ENCODE measurements at regions of chr1 and their contacts with region 1.

Region 1: DNA sequence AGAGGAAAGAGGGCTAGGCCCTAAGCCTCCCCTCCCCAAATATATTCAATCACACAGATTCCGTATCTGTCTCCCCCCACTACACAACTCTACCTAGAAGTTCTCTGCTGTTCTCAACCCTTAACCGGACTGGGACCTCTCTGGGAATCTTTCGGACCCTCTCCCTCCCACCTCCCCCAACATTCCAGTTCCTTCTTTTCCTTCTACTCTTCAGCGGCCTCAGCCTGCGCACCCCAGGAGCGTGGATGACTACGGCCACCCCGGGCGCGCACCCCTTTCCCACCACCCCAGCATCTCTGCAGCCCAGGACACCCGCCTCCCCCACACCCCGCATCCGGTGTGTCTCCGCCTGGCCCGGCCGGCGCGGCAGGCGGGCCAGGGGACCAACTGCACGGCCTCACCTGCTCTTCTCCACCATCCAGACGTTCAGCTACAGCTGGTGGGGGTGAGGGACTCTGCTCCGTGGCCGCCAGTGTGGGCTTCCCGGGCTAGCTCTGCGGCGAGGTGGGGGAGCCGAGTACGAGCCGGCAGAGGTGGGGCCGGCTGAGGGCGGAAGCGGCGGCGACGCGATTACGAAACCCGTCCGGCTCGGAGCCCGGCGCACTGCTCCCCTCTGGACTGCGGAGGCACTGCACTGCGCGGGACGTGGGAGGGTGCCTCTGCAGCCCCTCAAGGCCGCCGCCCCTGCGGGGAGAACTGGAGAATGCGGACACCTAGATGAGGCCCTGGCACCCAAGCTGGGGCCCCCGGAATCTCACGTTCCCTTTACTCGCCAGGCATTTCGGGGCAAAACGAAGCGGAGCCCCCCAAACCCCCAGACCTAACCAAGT is at the start of gene CDC42SE1:
- DNase-seq: peak; percentile 87
- H3K4me3 Mint-ChIP-seq: peak within 1 kb of the TSS; percentile 97
- H3K27ac Mint-ChIP-seq: peak within 1 kb of the TSS; percentile 97
- H3K4me1 Mint-ChIP-seq: peaks cover 51% of the 10 kb centered on the region
- H3K27me3 Mint-ChIP-seq: no peaks in the 10 kb centered on the region
- total RNA-seq, gene CDC42SE1: 345 to 347 TPM

Region 2: GRCh38 chr1:151047925-151048645 is 11.2 kb before region 1 on chr1:
- CTCF ChIA-PET with region 1: interaction called, 48 read pairs
- POLR2A ChIA-PET with region 1: interaction called, 148 read pairs
- DNase-seq: peak; percentile 65
- H3K4me3 Mint-ChIP-seq: peak overlapping the region; percentile 82
- H3K27ac Mint-ChIP-seq: peak overlapping the region; percentile 79
- H3K4me1 Mint-ChIP-seq: peaks cover 57% of the 10 kb centered on the region
- H3K27me3 Mint-ChIP-seq: no peaks in the 10 kb centered on the region

Region 3: GRCh38 chr1:151070474-151071276 is 11.4 kb after region 1 on chr1 and contains the start of gene GABPB2:
- CTCF ChIA-PET with region 1: interaction called, 23 read pairs
- POLR2A ChIA-PET with region 1: interaction called, 129 read pairs
- DNase-seq: peak; percentile 88
- H3K4me3 Mint-ChIP-seq: peak within 1 kb of the TSS; percentile 98
- H3K27ac Mint-ChIP-seq: peak within 1 kb of the TSS; percentile 99
- H3K4me1 Mint-ChIP-seq: peaks cover 31% of the 10 kb centered on the region
- H3K27me3 Mint-ChIP-seq: no peaks in the 10 kb centered on the region
- total RNA-seq, gene GABPB2: 24.5 to 25.9 TPM

Region 4: DNA sequence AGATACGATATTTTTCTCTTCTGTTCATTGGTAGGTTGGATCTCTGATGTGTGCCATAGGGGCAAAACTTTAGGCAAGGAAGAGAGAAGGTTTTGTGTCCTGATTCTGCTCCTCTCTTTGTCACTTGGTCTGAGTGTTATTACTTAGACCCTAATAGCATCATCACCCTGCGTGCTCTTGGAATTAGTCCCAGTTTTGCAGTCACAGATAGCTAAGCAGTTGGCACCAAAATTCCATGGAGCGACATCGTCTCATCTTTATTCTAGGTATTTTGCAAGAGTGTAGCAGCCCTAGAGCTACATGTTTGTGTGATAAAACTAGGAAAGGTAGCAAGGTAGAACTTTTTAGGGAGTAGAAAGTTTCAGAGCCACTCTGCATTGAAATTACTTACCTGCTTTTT is 162.8 kb after region 1 on chr1:
- CTCF ChIA-PET with region 1: no interaction called
- POLR2A ChIA-PET with region 1: no interaction called
- DNase-seq: no peak
- H3K4me3 Mint-ChIP-seq: no peak overlapping the region
- H3K27ac Mint-ChIP-seq: no peak overlapping the region
- H3K4me1 Mint-ChIP-seq: peaks cover 6% of the 10 kb centered on the region
- H3K27me3 Mint-ChIP-seq: no peaks in the 10 kb centered on the region

Measured in activated CD4-positive, alpha-beta memory T cell treated with anti-CD3 and anti-CD28 coated beads, Interleukin-2, amount 10 ng/mL, durations not matched to agents 7 days and 5 days (primary cell).